Activated naive CD4-positive, alpha-beta T cell treated with anti-CD3 and anti-CD28 coated beads for 36 hours (primary cell): ENCODE measurements at regions of chr11 and their contacts with region 1.

Region 1: DNA sequence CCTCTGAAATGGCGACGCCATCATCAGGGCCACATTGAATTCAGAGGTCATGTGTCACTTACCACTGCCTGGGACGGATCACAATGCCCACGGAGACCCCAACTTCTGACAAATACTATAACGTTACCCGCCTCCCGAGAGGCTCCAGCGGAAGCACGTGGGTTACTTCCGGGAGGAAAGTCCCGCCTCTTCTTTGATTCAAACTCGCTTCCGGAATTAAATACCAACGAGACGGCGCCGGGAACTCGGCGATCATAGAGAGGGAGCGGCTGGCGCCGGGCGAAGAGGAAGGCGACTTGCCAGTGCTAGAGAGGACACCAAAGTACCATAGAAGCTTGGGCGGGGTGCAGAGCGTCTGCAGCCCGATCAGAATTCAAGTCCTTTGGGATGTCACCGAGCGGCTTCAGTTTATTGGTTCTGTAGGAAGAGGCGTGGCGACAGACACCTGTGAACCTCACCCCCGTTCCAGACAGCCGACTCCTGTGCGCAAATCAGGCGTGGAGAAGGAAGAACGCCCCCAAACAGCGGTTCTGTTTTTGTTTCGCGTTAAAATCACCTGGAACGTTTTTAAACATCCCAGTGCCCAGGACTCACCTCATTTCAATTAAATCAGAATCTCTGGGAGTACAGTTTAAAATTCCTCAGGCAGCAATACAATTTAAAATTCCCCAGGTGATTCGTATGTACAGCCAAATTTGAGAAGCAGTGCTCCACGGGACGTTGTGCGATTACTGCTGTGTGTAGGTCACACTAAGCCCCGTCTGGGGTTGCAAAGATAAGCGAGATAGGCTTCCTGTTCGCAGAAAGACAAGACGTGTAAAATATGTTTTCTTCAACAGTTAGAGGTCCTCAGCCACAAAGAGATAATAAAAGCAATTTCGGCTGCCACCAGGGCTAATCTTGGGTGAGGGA is at the start of gene TIMM10:
- DNase-seq: peak; percentile 97
- H3K4me3 Mint-ChIP-seq: peak within 1 kb of the TSS; percentile 90
- H3K27ac Mint-ChIP-seq: peak within 1 kb of the TSS; percentile 87
- H3K4me1 Mint-ChIP-seq: peaks cover 38% of the 10 kb centered on the region
- H3K27me3 Mint-ChIP-seq: no peaks in the 10 kb centered on the region
- total RNA-seq, gene TIMM10: 131 to 136 TPM

Region 2: GRCh38 chr11:56296898-56297297 is 1234.0 kb before region 1 on chr11:
- CTCF ChIA-PET with region 1: no interaction called
- intact Hi-C with region 1: no loop called
- DNase-seq: no peak
- H3K4me3 Mint-ChIP-seq: no peak overlapping the region
- H3K27ac Mint-ChIP-seq: no peak overlapping the region
- H3K4me1 Mint-ChIP-seq: no peaks in the 10 kb centered on the region
- H3K27me3 Mint-ChIP-seq: no peaks in the 10 kb centered on the region

Region 3: GRCh38 chr11:57345555-57346211 is 185.2 kb before region 1 on chr11:
- CTCF ChIA-PET with region 1: interaction called, 40 read pairs
- intact Hi-C with region 1: loop called (anchors 1 kb)
- DNase-seq: peak; percentile 81
- H3K4me3 Mint-ChIP-seq: no peak overlapping the region
- H3K27ac Mint-ChIP-seq: no peak overlapping the region
- H3K4me1 Mint-ChIP-seq: peaks cover 3% of the 10 kb centered on the region
- H3K27me3 Mint-ChIP-seq: no peaks in the 10 kb centered on the region

Region 4: DNA sequence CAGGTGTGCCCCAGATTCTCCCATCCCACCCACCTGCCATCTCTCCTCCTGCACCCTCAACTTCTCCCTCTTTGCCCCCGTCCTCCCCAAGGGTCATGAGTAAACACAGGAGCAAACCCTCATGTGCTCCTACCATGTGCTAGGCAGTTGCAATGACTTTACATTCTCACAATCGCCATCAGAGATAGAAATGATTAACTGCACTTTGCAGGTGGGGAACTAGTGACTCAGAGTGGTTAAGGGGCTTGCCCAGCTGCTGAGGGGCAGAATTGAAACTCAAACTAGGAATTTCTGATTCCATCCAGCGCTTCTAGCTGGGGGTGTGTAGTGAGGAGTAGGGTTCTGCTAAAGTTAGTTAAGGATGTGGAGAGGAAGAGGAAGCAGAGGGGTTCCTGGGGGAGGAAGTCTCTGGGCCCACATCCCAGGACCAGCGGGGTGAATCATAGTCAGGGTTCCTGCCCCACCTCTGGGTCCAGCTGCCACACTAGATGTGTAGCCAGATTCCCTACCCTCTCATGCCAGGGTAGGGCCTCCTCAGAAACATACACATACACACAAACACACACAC is 124.4 kb before region 1 on chr11:
- CTCF ChIA-PET with region 1: no interaction called
- intact Hi-C with region 1: no loop called
- DNase-seq: peak; percentile 75
- H3K4me3 Mint-ChIP-seq: no peak overlapping the region
- H3K27ac Mint-ChIP-seq: peak overlapping the region; percentile 78
- H3K4me1 Mint-ChIP-seq: peaks cover 60% of the 10 kb centered on the region
- H3K27me3 Mint-ChIP-seq: no peaks in the 10 kb centered on the region

Region 5: DNA sequence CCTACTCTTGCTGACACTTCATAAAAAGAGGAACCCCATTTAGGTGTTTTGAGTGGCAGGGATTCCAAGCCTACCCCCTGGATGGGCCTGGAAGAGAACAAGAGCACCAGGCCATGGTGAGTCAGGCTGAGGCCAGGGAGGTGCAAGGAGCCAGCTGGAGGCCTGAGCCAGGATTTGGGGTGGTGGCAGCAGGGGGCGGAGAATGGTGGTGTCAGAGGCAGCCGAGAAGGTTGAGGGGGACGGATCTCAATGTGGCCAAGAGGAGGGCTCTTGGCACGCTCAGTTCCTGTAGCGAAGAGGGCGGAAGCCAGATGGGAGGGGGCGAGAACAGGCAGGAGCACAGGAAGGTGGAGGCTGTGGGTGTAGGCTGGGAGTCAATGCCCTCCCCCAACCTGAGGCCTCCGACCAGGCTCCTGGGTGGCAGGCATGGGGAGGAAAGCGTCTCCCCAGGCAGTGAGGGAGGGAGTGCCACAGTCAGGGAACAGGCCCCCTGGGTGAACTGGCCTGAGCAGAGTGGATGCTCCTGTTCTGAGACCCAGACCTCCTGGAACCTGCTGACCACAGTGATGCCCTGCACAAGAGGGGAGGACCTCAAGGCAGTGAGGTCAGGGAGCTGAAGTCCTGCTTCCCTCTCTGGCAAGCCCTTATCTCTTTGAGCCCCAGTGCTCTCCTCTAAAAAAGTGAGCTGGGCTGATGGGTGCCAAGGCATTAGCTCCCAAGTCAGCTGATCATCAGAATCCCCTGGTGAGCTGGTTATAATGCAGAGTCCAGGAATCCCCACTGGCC is 56.6 kb before region 1 on chr11:
- CTCF ChIA-PET with region 1: interaction called, 29 read pairs
- intact Hi-C with region 1: loop called (anchors 5 kb)
- DNase-seq: peak; percentile 68
- H3K4me3 Mint-ChIP-seq: no peak overlapping the region
- H3K27ac Mint-ChIP-seq: no peak overlapping the region
- H3K4me1 Mint-ChIP-seq: peaks cover 27% of the 10 kb centered on the region
- H3K27me3 Mint-ChIP-seq: peaks cover 8% of the 10 kb centered on the region

Region 6: DNA sequence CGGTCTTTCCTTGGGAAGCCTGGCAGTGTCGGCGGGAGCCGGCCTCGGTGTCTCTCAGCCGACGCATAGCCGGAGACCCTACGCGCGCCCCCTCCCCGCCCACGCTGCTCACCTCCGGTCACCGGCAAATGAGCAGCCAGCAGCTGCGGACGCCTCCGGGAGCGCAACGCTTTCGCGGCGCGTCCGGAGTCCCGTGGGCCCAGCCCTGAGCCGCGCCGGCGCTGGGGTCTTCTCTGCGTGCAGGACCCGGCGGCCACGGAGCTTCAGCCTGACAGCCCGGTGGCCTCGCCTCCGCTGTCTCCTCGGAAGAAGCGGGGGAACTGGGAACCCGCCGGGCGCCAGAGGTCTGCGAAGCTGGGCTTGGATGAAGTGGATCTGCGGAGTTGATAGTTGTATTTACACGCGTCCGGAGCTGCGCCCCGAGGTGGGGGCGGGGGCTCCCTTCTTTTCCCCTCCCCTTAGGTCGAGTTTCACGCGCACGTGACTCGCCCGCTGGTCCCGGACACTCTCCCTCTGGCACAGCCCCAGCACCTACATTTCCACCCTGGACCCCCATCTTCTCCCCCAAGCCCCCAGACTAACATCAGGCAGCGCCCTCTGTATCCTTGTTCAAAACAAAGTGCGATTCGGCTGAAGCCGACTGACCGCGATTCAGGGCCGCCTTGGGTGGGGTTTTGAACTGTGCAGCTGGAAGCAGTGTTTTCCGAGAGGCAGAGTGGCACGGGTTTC is 15.4 kb before region 1 on chr11 and contains the start of gene SLC43A1:
- CTCF ChIA-PET with region 1: interaction called, 133 read pairs
- intact Hi-C with region 1: loop called (anchors 1 kb)
- DNase-seq: peak; percentile 46
- H3K4me3 Mint-ChIP-seq: peak within 1 kb of the TSS; percentile 98
- H3K27ac Mint-ChIP-seq: peak within 1 kb of the TSS; percentile 91
- H3K4me1 Mint-ChIP-seq: peaks cover 30% of the 10 kb centered on the region
- H3K27me3 Mint-ChIP-seq: no peaks in the 10 kb centered on the region
- total RNA-seq, gene SLC43A1: 26.5 to 29.7 TPM

Region 7: GRCh38 chr11:57657194-57658022 is 126.6 kb after region 1 on chr11 and contains the start of gene CLP1:
- CTCF ChIA-PET with region 1: no interaction called
- intact Hi-C with region 1: loop called (anchors 1 kb)
- DNase-seq: peak; percentile 100
- H3K4me3 Mint-ChIP-seq: peak within 1 kb of the TSS; percentile 92
- H3K27ac Mint-ChIP-seq: peak within 1 kb of the TSS; percentile 90
- H3K4me1 Mint-ChIP-seq: peaks cover 34% of the 10 kb centered on the region
- H3K27me3 Mint-ChIP-seq: no peaks in the 10 kb centered on the region
- total RNA-seq, gene CLP1: 11.3 to 14.2 TPM

Region 8: DNA sequence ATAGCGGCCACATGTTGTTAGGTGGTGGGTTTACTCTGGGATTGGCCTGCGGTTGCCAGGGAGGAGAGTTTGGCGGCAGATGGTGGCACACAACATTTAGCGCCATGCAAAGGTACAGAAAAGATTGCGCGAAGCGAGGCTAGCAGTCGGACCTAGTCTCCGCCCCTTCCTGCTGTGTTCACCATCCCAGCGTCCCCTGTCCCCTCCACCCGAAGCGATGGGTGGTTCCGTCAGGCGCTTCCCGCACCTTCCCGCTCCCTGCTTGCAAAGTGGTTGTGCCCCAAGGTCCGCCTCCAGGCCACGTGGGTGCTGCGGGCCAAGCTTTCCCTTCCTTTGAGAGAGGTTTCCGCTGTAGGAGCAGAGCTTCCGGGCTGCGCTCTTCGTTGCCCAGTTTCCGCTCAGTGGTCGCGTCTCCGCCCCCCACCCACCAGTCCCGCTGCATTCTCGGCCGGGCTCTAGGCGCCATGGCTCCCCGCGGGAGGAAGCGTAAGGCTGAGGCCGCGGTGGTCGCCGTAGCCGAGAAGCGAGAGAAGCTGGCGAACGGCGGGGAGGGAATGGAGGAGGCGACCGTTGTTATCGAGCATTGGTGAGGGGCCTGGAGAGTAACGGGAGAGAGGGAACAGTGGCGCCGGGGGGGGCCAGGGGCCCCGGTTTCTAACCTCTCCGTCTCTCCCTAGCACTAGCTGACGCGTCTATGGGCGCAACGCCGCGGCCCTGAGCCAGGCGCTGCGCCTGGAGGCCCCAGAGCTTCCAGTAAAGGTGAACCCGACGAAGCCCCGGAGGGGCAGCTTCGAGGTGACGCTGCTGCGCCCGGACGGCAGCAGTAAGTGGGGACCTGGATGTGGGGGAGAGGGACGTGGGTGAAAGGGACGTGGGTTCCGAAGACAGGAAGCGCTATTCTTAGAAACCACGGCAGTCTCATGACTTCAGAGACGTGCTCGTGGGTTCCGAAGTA is 210.6 kb after region 1 on chr11 and contains the start of gene SELENOH:
- CTCF ChIA-PET with region 1: no interaction called
- intact Hi-C with region 1: loop called (anchors 1 kb)
- DNase-seq: peak; percentile 98
- H3K4me3 Mint-ChIP-seq: peak within 1 kb of the TSS; percentile 97
- H3K27ac Mint-ChIP-seq: peak within 1 kb of the TSS; percentile 99
- H3K4me1 Mint-ChIP-seq: peaks cover 32% of the 10 kb centered on the region
- H3K27me3 Mint-ChIP-seq: no peaks in the 10 kb centered on the region
- total RNA-seq, gene SELENOH: 249 to 282 TPM